SK-N-SH (cell line): ENCODE measurements at regions of chr1 and their contacts with region 1.

Region 1: GRCh38 chr1:223087291-223088255 is 55.5 kb downstream of the TLR5 start:
- DNase-seq: no peak
- H3K4me3 ChIP-seq: no peak overlapping the region
- H3K27ac ChIP-seq: no peak overlapping the region
- H3K4me1 ChIP-seq: peaks cover 0 to 9% of the 10 kb centered on the region in 2 experiments; a peak in 1 of 4 replicates
- H3K27me3 ChIP-seq: no peaks in the 10 kb centered on the region; the same call in 1 of the 2 replicates
- CTCF ChIP-seq: no peak
- EP300 ChIP-seq: no peak
- RAD21 ChIP-seq: no peak

Region 2: DNA sequence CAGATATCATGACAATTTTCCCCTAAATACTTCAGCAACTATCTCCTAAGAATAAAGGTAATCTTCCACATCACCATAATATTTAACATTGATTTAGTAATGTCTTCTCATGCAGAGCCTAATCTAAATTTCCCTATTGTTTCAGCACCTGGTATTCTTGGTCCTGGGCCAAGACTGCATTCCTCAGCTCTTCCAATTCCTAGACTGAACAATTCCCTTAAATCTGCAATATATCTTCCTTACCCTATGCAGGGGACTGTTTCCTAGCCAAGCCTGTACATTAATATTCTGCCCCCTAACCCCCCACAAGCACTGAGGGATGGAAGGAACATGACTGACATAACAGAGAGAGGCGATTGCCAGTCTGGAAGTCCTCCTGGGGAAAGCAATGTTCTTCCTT is 301.5 kb before region 1 on chr1:
- CTCF ChIA-PET with region 1: interaction called, 69 read pairs
- POLR2A ChIA-PET with region 1: no interaction called
- DNase-seq: no peak
- H3K4me3 ChIP-seq: no peak overlapping the region
- H3K27ac ChIP-seq: no peak overlapping the region
- H3K4me1 ChIP-seq: no peaks in the 10 kb centered on the region; a peak in 1 of 4 replicates
- H3K27me3 ChIP-seq: peaks cover 8% of the 10 kb centered on the region; the same call in 1 of the 2 replicates
- CTCF ChIP-seq: no peak
- EP300 ChIP-seq: no peak
- RAD21 ChIP-seq: no peak

Region 3: GRCh38 chr1:223000632-223001031 is 86.9 kb before region 1 on chr1:
- CTCF ChIA-PET with region 1: no interaction called
- POLR2A ChIA-PET with region 1: no interaction called
- DNase-seq: no peak
- H3K4me3 ChIP-seq: no peak overlapping the region
- H3K27ac ChIP-seq: no peak overlapping the region
- H3K4me1 ChIP-seq: peaks cover 2 to 6% of the 10 kb centered on the region in 2 experiments; a peak in 2 of 4 replicates
- H3K27me3 ChIP-seq: no peaks in the 10 kb centered on the region
- CTCF ChIP-seq: no peak
- EP300 ChIP-seq: no peak
- RAD21 ChIP-seq: no peak

Region 4: GRCh38 chr1:223097713-223098112 is 10.1 kb after region 1 on chr1:
- CTCF ChIA-PET with region 1: interaction called, 14 read pairs
- POLR2A ChIA-PET with region 1: no interaction called
- DNase-seq: no peak
- H3K4me3 ChIP-seq: no peak overlapping the region
- H3K27ac ChIP-seq: no peak overlapping the region
- H3K4me1 ChIP-seq: peaks cover 0 to under 1% of the 10 kb centered on the region in 2 experiments; a peak in 1 of 4 replicates
- H3K27me3 ChIP-seq: no peaks in the 10 kb centered on the region; the same call in 1 of the 2 replicates
- CTCF ChIP-seq: no peak
- EP300 ChIP-seq: no peak
- RAD21 ChIP-seq: no peak

Region 5: DNA sequence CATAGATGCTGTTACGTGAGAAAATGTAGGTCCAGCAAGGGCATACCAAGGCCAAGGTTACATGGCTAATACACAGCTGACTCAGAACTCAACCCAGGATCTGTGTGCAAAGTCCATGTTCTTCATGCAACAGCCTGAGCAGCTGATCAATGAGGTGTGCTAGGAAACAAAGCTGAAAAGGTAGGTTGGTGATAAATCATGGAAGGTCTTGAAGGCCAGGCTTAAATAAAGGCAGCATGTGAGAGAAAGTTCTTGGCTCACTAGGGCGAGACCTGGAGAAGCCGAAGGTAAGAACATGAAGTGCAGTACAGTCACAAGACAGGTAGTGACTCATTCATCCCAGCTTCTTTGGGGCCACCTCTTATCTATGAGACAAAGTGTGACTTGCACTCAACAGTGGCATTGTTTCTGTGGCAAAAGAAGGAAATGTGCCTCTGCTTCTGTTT is 22.0 kb after region 1 on chr1:
- CTCF ChIA-PET with region 1: interaction called, 10 read pairs
- POLR2A ChIA-PET with region 1: no interaction called
- DNase-seq: no peak
- H3K4me3 ChIP-seq: no peak overlapping the region
- H3K27ac ChIP-seq: no peak overlapping the region
- H3K4me1 ChIP-seq: no peaks in the 10 kb centered on the region
- H3K27me3 ChIP-seq: peaks cover 37% of the 10 kb centered on the region
- CTCF ChIP-seq: no peak
- EP300 ChIP-seq: no peak
- RAD21 ChIP-seq: no peak

Region 6: GRCh38 chr1:223133824-223134435 is 46.4 kb after region 1 on chr1:
- CTCF ChIA-PET with region 1: interaction called, 93 read pairs
- POLR2A ChIA-PET with region 1: no interaction called
- DNase-seq: peak; percentile 93
- H3K4me3 ChIP-seq: peak overlapping the region; percentile 45 to 58
- H3K27ac ChIP-seq: no peak overlapping the region
- H3K4me1 ChIP-seq: peaks cover 10 to 16% of the 10 kb centered on the region in 2 experiments; a peak in 3 of 4 replicates
- H3K27me3 ChIP-seq: peaks cover 29% of the 10 kb centered on the region
- CTCF ChIP-seq: peak; percentile 95
- EP300 ChIP-seq: no peak
- RAD21 ChIP-seq: peak; percentile 77